PC-9 (cell line): ENCODE measurements at regions of chr14 and their contacts with region 1.

Region 1: GRCh38 chr14:92607702-92608429 is 94.3 kb downstream of the RIN3 start:
- DNase-seq: peak in 1 of 2 experiments; percentile 66
- H3K4me3 ChIP-seq: no peak overlapping the region
- H3K27ac ChIP-seq: peak overlapping the region; percentile 89
- H3K4me1 ChIP-seq: peaks cover 38% of the 10 kb centered on the region
- H3K27me3 ChIP-seq: no peaks in the 10 kb centered on the region
- CTCF ChIP-seq: no peak

Region 2: GRCh38 chr14:92680781-92681650 is 73.2 kb after region 1 on chr14:
- CTCF ChIA-PET with region 1: no interaction called
- POLR2A ChIA-PET with region 1: no interaction called
- intact Hi-C with region 1: loop called (anchors 5 kb)
- DNase-seq: peak; percentile 76 to 89
- H3K4me3 ChIP-seq: no peak overlapping the region
- H3K27ac ChIP-seq: peak overlapping the region; percentile 75
- H3K4me1 ChIP-seq: peaks cover 8% of the 10 kb centered on the region
- H3K27me3 ChIP-seq: no peaks in the 10 kb centered on the region
- CTCF ChIP-seq: peak; percentile 98